ENCODE measurements at regions of chr11 and their contacts with region 1.

Region 1: DNA sequence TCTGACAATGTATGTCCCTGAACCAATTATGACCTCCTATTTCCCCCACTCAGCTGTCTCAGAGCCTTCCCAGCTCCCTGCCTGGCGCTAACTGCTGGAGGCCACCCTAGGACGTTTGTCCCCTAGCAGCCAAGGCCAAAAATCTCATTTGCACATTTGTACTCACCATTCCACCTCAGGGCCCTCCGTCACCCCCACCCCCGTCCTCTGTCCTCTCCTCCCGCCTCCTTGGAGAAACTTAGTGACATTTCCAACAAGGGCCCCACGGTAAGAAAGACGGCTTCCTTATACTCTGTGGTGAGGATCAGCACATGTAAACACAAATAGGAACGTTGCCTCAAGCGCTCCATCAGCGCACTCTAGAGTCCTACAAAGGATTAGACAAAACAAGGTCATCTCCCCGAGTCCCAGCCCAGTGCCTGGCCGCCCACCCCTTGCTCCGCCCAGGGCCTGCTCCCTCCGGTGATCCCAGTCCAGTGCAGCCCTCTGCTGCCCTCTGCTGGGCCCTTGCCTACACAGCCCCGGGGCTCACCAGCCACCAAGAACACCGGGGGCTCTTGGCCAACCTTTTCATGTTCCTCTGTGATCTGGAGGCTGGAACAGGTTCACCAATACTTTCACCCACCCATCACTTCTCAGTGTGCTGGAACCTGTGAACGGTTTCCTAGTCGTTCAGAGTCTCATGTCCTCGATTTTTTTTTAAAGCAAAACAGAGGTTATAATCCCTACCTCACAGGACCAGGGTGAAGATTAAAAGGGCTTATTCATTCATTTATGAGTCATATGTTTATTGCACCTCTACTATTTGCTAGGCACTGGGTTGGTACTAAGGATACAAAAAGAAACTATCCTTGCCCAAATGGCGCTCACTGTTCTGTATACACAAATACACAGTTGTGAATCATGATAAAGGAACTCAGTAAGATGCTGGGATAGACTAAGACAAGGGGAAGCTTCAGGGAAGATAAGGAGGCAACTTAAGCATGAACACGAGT is 15.3 kb upstream of the CTR9 start:
- ATAC-seq: peak; percentile 99 to 100 (median 99)
- H3K4me3 ChIP-seq: peak overlapping the region in 2 of 5 donors; percentile 5 to 6
- H3K27ac ChIP-seq: no peak overlapping the region
- H3K4me1 ChIP-seq: peaks cover 2 to 4% of the 10 kb centered on the region in 2 donors

Region 2: DNA sequence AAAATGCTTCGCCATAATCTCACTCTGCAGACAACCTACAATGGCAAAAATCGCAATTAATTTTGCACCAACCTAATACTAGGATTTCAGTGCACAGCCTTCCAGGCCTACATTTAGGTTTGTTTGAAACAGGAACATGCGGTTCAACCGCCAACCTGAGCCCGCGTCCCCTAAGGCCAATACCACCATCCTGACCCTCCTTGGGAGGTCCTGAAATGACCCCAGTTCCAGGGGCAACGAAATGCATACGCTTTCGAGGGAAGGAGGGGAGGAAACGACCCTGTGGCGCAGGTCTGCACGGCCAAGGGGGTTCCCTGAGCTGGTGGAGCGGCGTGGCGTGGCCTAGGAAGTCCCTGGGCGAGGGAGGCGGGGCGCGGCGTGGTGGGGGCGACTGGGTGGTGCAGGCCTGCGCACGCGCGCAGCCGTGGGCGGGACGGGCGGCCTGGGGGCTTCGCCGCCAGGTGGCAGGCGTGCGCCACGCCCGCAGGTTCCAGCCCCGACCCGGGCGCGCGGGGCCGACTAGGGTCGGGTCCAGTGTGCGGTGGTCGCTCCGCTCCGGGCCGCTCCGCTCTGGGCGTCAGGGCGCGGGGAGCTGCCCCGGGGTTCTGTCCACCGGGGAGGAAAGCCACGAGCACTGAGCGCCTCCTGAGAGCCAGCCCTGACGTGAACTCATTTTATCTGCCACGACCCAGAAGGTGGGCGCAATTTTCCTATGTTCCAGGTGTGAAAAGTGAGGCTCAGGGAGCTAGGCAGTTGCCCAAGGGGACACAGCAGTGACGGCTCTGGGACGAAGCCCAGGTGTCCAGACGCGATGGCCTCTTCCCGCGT is 977.8 kb before region 1 on chr11:
- in situ Hi-C with region 1: loop called in 1 of 9 experiments (anchors 25 kb)
- ATAC-seq: peak; percentile 10 to 93 (median 84)
- H3K4me3 ChIP-seq: peak overlapping the region; percentile 34 to 47 (median 45)
- H3K27ac ChIP-seq: no peak overlapping the region
- H3K4me1 ChIP-seq: peaks cover 11% of the 10 kb centered on the region in 2 donors

Region 3: GRCh38 chr11:10387206-10388083 is 348.3 kb before region 1 on chr11:
- in situ Hi-C with region 1: loop called in 1 of 9 experiments (anchors 25 kb)
- ATAC-seq: peak in 3 of 8 experiments; percentile 38 to 76 (median 67)
- H3K4me3 ChIP-seq: no peak overlapping the region
- H3K27ac ChIP-seq: no peak overlapping the region
- H3K4me1 ChIP-seq: peaks cover 0 to 4% of the 10 kb centered on the region in 2 donors

Region 4: GRCh38 chr11:10405855-10406592 is 329.8 kb before region 1 on chr11:
- in situ Hi-C with region 1: loop called in 7 of 9 experiments (anchors 10 to 25 kb)
- ATAC-seq: peak; percentile 92 to 100 (median 99)
- H3K4me3 ChIP-seq: no peak overlapping the region
- H3K27ac ChIP-seq: no peak overlapping the region
- H3K4me1 ChIP-seq: no peaks in the 10 kb centered on the region

Region 5: DNA sequence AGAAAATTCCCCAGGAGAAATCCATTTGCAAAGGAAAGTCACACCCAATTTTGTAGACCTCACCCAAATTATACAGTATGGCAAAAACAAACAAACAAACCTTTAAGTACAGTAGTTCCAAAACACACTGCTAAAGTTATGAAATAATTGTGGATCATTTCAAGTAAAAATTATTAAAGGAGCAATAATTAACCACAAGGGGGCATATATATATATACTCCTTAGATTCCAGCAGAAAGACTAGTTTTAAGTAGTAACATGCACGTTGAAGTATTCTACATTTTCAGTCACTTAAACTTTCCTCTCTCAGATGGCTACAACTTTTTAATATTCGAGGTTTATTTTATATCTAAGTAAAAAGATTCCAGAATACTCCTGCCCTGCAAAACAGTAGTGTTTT is 221.6 kb before region 1 on chr11:
- in situ Hi-C with region 1: loop called in 2 of 9 experiments (anchors 25 kb)
- ATAC-seq: peak in 1 of 8 experiments; percentile 36
- H3K4me3 ChIP-seq: no peak overlapping the region
- H3K27ac ChIP-seq: no peak overlapping the region
- H3K4me1 ChIP-seq: peaks cover 0 to 2% of the 10 kb centered on the region in 2 donors

Region 6: DNA sequence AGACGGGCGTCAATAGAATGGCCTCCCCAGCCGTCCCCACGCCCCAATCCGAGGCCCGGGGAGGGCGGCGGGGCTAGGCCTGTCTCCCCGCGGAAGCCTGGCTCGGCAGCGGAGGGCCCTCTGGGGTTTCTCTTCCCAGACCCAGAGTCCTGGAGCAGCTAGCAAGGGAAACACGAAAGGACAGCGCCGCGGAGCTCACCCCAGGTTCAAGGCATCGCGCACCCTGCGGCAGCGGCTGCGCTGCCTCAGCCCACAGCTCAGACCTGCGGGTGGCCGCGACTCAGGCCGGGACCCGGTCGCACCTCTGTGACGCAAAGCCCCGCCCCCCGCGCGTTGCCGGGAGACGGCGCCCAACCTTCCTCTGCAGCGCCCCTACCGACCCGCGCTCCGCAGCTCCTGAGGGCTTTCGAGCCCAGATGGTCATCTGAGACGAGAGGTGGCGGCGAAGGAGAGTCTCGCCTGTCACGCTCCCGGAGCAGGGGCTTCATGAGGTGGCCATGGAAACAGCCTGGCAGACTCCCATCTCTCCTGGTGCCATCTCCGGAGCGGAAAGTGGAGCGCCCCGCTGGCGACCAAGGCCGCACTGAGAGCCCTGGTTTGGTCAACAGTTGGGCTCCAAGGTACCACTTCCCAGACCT is 194.7 kb before region 1 on chr11 and contains the start of gene RNF141:
- in situ Hi-C with region 1: loop called in 2 of 9 experiments (anchors 25 kb)
- ATAC-seq: peak; percentile 96 to 98 (median 97)
- H3K4me3 ChIP-seq: peak within 1 kb of the TSS; percentile 68 to 85 (median 70)
- H3K27ac ChIP-seq: peak within 1 kb of the TSS; percentile 72 to 78
- H3K4me1 ChIP-seq: peaks cover 4% of the 10 kb centered on the region in 2 donors
- total RNA-seq, gene RNF141: 19.0 to 44.3 (median 21.9) TPM

Measured in motor neuron (in vitro differentiated cells).